Naive thymus-derived CD8-positive, alpha-beta T cell (primary cell): ENCODE measurements at regions of chr10 and their contacts with region 1.

Region 1: GRCh38 chr10:14583252-14583651 is 191.4 kb downstream of the FAM107B start:
- DNase-seq: peak; percentile 61 to 94 (median 86)
- ATAC-seq: peak; percentile 70 to 78
- H3K4me3 Mint-ChIP-seq: peak overlapping the region; percentile 72 to 90 (median 83)
- H3K27ac Mint-ChIP-seq: peak overlapping the region; percentile 90 to 100 (median 98)
- H3K4me1 Mint-ChIP-seq: peaks cover 49 to 98% (median 95%) of the 10 kb centered on the region in 4 donors
- H3K27me3 Mint-ChIP-seq: no peaks in the 10 kb centered on the region

Region 2: GRCh38 chr10:14556285-14556956 is 26.8 kb before region 1 on chr10:
- POLR2A ChIA-PET with region 1: interaction called, 28 read pairs
- DNase-seq: no peak
- ATAC-seq: peak in 1 of 2 donors; percentile 3
- H3K4me3 Mint-ChIP-seq: peak overlapping the region; percentile 19 to 89 (median 74)
- H3K27ac Mint-ChIP-seq: peak overlapping the region; percentile 89 to 97 (median 92)
- H3K4me1 Mint-ChIP-seq: peaks cover 71 to 99% (median 95%) of the 10 kb centered on the region in 4 donors
- H3K27me3 Mint-ChIP-seq: no peaks in the 10 kb centered on the region

Region 3: GRCh38 chr10:14601872-14602725 is 18.8 kb after region 1 on chr10:
- POLR2A ChIA-PET with region 1: interaction called, 30 read pairs
- DNase-seq: peak in 7 of 10 donors; percentile 41 to 79 (median 48)
- ATAC-seq: peak; percentile 14 to 25
- H3K4me3 Mint-ChIP-seq: peak overlapping the region; percentile 80 to 100 (median 98)
- H3K27ac Mint-ChIP-seq: peak overlapping the region; percentile 80 to 98 (median 92)
- H3K4me1 Mint-ChIP-seq: peaks cover 41 to 87% (median 72%) of the 10 kb centered on the region in 4 donors
- H3K27me3 Mint-ChIP-seq: no peaks in the 10 kb centered on the region